Natural killer cell (primary cell): ENCODE measurements at regions of chr3 and their contacts with region 1.

Region 1: GRCh38 chr3:33096093-33096868 is 665 bp downstream of the GLB1 start:
- DNase-seq: peak; percentile 36 to 68
- ATAC-seq: peak; percentile 52 to 72 (median 57)
- H3K4me3 ChIP-seq: peak overlapping the region; percentile 88
- H3K4me3 Mint-ChIP-seq: peak overlapping the region; percentile 92
- H3K27ac ChIP-seq: peak overlapping the region; percentile 93
- H3K27ac Mint-ChIP-seq: peak overlapping the region; percentile 65 to 87
- H3K4me1 ChIP-seq: peaks cover 18% of the 10 kb centered on the region
- H3K4me1 Mint-ChIP-seq: peaks cover 32 to 33% of the 10 kb centered on the region in 2 donors
- H3K27me3 ChIP-seq: no peaks in the 10 kb centered on the region
- H3K27me3 Mint-ChIP-seq: no peaks in the 10 kb centered on the region
- CTCF ChIP-seq: no peak

Region 2: DNA sequence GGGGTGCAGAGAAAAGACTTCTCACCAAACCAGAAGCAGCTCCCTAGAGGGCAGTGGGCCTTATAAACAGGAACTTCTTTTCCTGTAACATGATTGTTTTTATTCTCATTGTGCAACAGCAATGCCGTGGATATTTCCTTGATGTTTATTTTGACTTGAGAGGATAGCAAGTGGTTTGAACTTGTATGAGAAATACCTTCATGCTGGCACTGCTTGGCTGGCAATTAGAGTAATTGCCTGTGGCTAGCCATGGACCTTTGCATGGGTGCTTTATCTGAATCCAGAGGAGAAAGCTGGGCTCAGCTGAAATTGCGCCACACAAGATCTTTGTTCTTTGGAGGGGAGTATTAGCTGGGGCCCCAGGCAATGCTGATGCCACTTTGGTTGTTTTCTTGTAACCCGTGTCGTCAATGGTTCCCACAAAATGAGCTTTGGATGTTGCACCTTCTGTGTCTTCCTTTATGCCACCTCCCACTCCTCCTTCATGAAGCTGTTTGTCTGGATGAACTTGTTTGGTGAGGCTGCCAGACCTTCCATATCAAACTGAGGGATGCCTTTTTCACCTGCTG is 819.9 kb before region 1 on chr3:
- intact Hi-C with region 1: no loop called
- DNase-seq: no peak
- ATAC-seq: no peak
- H3K4me3 ChIP-seq: no peak overlapping the region
- H3K4me3 Mint-ChIP-seq: no peak overlapping the region
- H3K27ac ChIP-seq: no peak overlapping the region
- H3K27ac Mint-ChIP-seq: no peak overlapping the region
- H3K4me1 ChIP-seq: no peaks in the 10 kb centered on the region
- H3K4me1 Mint-ChIP-seq: no peaks in the 10 kb centered on the region
- H3K27me3 ChIP-seq: no peaks in the 10 kb centered on the region
- H3K27me3 Mint-ChIP-seq: peaks cover 0 to 6% of the 10 kb centered on the region in 2 donors
- CTCF ChIP-seq: no peak

Region 3: DNA sequence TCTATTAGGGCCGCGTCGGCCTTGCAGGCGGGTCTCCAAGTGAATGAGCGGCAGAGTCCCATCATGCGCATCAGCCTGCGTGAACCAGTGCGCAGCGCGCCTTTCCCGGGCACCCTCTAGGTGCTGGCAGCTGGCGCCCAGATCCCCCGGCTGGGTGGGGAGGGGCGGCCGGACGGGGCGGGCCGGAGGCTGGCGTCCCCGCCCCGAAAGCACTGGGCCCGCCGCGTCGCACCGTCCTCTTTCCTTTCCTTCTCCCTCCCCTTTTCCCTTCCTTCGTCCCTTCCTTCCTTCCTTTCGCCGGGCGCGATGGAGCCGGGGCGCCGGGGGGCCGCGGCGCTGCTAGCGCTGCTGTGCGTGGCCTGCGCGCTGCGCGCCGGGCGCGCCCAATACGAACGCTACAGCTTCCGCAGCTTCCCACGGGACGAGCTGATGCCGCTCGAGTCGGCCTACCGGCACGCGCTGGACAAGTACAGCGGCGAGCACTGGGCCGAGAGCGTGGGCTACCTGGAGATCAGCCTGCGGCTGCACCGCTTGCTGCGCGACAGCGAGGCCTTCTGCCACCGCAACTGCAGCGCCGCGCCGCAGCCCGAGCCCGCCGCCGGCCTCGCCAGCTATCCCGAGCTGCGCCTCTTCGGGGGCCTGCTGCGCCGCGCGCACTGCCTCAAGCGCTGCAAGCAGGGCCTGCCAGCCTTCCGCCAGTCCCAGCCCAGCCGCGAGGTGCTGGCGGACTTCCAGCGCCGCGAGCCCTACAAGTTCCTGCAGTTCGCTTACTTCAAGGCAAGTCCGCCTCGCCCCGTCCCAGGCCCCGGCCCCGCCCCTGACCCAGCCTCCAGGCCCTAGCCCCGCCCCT is 17.7 kb after region 1 on chr3 and contains the start of gene CRTAP:
- intact Hi-C with region 1: loop called (anchors 2 kb)
- DNase-seq: peak; percentile 77 to 91
- ATAC-seq: peak; percentile 89 to 94 (median 90)
- H3K4me3 ChIP-seq: peak within 1 kb of the TSS; percentile 43
- H3K4me3 Mint-ChIP-seq: peak within 1 kb of the TSS; percentile 88
- H3K27ac ChIP-seq: peak within 1 kb of the TSS; percentile 50
- H3K27ac Mint-ChIP-seq: peak within 1 kb of the TSS; percentile 66 to 86
- H3K4me1 ChIP-seq: peaks cover 19% of the 10 kb centered on the region
- H3K4me1 Mint-ChIP-seq: peaks cover 9 to 19% of the 10 kb centered on the region in 2 donors
- H3K27me3 ChIP-seq: no peaks in the 10 kb centered on the region
- H3K27me3 Mint-ChIP-seq: no peaks in the 10 kb centered on the region
- CTCF ChIP-seq: no peak
- total RNA-seq, gene CRTAP: 32.4 to 38.2 (median 37.9) TPM